ENCODE measurements at regions of chr2 and their contacts with region 1.

Region 1: GRCh38 chr2:177724398-177725287 is 332.1 kb downstream of the AGPS start:
- DNase-seq: peak; percentile 37 to 92 (median 70)

Region 2: GRCh38 chr2:177419274-177419673 is 305.4 kb before region 1 on chr2:
- intact Hi-C with region 1: loop called (anchors 10 kb)
- DNase-seq: no peak

Region 3: GRCh38 chr2:177489719-177490301 is 234.8 kb before region 1 on chr2:
- intact Hi-C with region 1: loop called (anchors 10 kb)
- DNase-seq: no peak

Region 4: DNA sequence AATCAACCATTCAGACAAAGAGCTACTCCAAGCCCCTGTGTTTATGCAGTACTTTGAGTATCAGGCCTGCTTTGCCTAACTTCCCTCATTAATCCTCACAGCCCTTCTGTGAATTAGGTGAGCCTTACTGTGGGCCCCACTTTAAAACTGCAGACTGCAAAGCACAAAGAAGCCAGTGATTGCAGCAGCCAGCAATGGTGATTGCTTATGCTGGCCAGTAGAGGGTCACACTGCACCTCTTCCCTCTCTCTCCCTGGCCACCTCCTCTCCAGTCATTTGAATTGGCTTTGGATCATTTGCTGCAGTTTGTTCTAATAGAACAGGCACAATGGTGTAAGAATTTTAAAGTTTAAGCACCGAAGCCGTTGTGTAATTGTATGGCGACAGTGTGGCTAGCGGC is 102.1 kb before region 1 on chr2:
- intact Hi-C with region 1: loop called (anchors 5 kb)
- DNase-seq: peak in 2 of 10 donors; percentile 29 to 46

Region 5: DNA sequence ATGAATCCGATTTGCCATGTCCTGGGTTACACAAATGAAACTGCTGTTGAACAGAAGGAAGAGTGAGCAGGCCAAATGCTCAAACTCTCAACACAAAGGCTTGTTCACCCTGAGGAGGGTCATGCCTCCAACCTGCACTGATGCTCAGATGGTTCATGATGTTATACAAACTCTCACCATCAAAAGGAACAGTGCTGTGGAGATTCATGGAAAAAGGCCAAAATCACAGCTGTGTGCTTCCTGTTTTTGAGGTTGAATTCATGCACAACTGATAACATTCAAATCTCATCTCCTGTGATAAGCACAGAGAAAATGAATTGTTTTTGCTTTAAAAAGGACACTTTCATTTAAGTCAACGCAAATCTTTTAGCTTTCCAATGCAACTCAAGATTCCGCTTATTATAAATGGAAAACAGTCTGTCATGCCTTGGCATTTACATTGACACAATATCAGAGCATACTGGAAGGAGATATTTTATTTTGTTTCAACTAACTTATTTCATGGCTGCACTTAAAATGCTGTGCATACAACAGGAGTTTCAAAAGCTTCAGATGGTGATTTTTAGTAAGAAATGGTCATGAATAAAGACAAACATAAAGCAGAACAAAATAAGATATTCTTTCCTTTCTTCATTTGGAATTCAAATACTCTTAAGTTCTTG is 1104.8 kb after region 1 on chr2:
- intact Hi-C with region 1: no loop called
- DNase-seq: no peak

Measured in posterior cingulate gyrus (tissue), 11 donors.